Dendritic cell treated with granulocyte-macrophage colony-stimulating factor and Interleukin-4, amounts not matched to agents 40 ng/mL and 50 ng/mL, for 4 days (primary cell): ENCODE measurements at regions of chr2 and their contacts with region 1.

Region 1: GRCh38 chr2:68157402-68158133 is at the start of gene PNO1:
- H3K4me3 Mint-ChIP-seq: peak within 1 kb of the TSS; percentile 99
- H3K27ac Mint-ChIP-seq: peak within 1 kb of the TSS; percentile 95
- H3K4me1 Mint-ChIP-seq: peaks cover 13% of the 10 kb centered on the region
- H3K27me3 Mint-ChIP-seq: no peaks in the 10 kb centered on the region

Region 2: GRCh38 chr2:67952066-67952465 is 205.5 kb before region 1 on chr2:
- intact Hi-C with region 1: no loop called
- H3K4me3 Mint-ChIP-seq: no peak overlapping the region
- H3K27ac Mint-ChIP-seq: no peak overlapping the region
- H3K4me1 Mint-ChIP-seq: peaks cover 5% of the 10 kb centered on the region
- H3K27me3 Mint-ChIP-seq: peaks cover 3% of the 10 kb centered on the region

Region 3: GRCh38 chr2:68062680-68063387 is 94.7 kb before region 1 on chr2 and contains the start of gene C1D:
- intact Hi-C with region 1: loop called (anchors 2 kb)
- H3K4me3 Mint-ChIP-seq: peak within 1 kb of the TSS; percentile 91
- H3K27ac Mint-ChIP-seq: peak within 1 kb of the TSS; percentile 98
- H3K4me1 Mint-ChIP-seq: peaks cover 33% of the 10 kb centered on the region
- H3K27me3 Mint-ChIP-seq: peaks cover 8% of the 10 kb centered on the region

Region 4: DNA sequence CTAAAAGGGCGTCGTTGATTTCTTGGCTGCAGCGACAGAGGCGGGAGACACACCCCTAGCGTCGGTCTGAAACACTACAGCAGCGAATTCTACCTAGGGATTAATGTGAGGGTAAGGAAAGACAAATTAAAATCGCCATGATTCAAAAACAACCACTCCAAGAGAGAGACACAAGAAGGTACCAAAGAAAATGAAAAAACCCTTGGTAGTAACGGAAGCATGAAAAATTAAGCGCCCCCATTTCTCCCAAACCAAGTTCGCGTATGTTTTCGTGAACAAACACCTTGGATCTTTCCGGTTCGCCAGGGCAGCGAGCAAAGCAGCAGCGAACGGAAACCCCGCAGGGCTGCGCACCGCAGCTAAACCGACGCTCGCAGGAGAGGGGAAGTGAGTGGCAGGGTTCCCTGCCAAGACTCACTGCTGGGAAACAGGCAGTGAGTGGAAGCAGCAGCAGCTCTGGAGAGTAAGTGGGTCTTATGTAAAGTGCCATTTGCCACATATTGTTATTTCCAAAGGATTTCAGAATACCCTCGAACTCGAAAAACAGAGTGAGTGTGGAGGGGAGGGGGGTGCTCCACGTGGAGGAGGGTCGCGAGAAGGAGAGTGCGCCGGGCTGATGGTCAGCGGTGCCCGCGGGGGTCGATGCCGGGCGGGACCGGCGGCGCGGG is 93.8 kb after region 1 on chr2:
- intact Hi-C with region 1: loop called (anchors 2 kb)
- H3K4me3 Mint-ChIP-seq: peak overlapping the region; percentile 94
- H3K27ac Mint-ChIP-seq: peak overlapping the region; percentile 97
- H3K4me1 Mint-ChIP-seq: peaks cover 30% of the 10 kb centered on the region
- H3K27me3 Mint-ChIP-seq: no peaks in the 10 kb centered on the region